ENCODE measurements at regions of chr5 and their contacts with region 1.

Region 1: DNA sequence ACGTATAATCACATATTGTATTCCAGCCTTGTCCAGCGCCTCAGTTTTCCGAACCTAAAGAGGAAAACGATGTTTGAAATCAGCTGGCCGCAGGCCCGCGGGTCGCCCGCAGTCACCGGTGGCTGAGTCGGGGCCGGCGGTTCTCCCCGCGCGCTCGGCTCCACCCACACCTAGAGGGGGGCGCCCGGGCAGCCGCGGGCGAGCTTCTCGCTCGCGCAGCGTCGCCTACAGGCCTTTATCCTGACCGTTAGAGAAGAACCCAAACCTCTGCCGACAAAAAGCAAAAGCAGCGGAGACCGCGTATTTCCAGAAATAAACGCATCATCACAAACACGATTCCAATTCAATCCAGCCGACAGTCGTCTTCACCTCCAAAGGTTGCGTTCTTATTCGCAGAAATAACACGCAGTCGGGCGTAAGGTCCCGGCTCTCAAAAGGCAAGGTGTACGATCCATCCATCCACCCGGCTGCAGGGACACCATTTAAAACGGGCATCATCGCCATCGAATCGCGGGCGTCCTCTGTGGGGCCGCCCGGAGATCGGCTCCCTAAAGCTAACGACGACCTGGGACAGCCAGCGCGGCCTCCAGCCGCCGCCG is 680 bp upstream of the NIPBL start:
- DNase-seq: peak; percentile 85
- ATAC-seq: peak; percentile 54
- H3K4me3 Mint-ChIP-seq: peak overlapping the region; percentile 89
- H3K27ac Mint-ChIP-seq: peak overlapping the region; percentile 100
- H3K4me1 Mint-ChIP-seq: peaks cover 31% of the 10 kb centered on the region
- H3K27me3 Mint-ChIP-seq: no peaks in the 10 kb centered on the region

Region 2: DNA sequence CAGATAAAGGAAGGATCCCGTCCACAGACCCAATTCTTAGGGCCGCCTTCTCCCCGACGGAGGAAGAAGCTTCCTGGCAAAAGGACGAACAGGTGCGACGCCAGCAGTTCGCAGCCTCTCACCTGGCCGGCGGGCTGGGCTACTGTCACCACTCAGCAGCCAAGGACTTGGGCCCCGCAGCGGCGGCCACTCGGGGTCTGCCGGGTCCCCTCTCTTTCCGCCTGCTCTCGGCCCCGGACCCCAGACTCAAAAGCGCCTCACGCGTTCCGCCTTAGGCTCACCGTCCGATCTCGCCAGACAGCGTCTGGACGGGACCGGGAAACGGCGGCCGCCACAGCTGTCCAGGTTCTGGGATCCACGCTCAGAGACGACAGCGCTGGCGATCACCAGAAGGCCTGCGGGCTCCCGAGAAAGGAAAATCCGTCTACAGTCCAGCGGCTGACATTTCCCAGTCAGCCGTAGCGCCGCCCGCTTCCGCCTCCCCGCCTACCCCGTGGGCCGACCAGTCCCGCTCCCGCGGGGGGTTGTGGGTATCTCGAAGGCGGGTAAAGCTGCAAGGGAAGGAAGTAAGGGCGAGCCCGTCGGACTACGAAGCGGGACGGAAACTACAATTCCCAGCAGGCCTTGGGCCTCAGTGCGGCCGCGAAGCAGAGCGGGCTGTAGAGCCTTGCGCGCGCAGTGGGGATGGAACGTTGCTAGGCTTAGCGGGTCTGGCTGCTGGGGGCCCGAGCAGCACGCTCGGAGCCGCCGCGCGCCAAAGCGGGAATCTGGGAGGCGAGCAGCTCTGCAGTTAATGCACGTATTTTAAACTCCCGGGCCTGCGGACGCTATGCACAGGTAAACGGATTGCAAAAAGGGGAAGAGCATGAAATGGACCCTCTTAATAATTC is 724.2 kb before region 1 on chr5 and contains the starts of genes LMBRD2 and SKP2:
- CTCF ChIA-PET with region 1: no interaction called
- POLR2A ChIA-PET with region 1: no interaction called
- intact Hi-C with region 1: loop called (anchors 2 kb)
- DNase-seq: peak; percentile 98
- ATAC-seq: peak; percentile 99
- H3K4me3 Mint-ChIP-seq: peak within 1 kb of the TSS; percentile 97
- H3K27ac Mint-ChIP-seq: peak within 1 kb of the TSS; percentile 91
- H3K4me1 Mint-ChIP-seq: peaks cover 55% of the 10 kb centered on the region
- H3K27me3 Mint-ChIP-seq: no peaks in the 10 kb centered on the region
- total RNA-seq, gene LMBRD2: 9.3 to 10.2 TPM
- total RNA-seq, gene SKP2: 48.0 to 56.8 TPM

Region 3: GRCh38 chr5:36932699-36933098 is 56.8 kb after region 1 on chr5:
- CTCF ChIA-PET with region 1: no interaction called
- POLR2A ChIA-PET with region 1: no interaction called
- intact Hi-C with region 1: no loop called
- DNase-seq: no peak
- ATAC-seq: no peak
- H3K4me3 Mint-ChIP-seq: no peak overlapping the region
- H3K27ac Mint-ChIP-seq: no peak overlapping the region
- H3K4me1 Mint-ChIP-seq: peaks cover 70% of the 10 kb centered on the region
- H3K27me3 Mint-ChIP-seq: no peaks in the 10 kb centered on the region

Region 4: GRCh38 chr5:36944607-36945225 is 68.8 kb after region 1 on chr5:
- CTCF ChIA-PET with region 1: interaction called, 4 read pairs
- POLR2A ChIA-PET with region 1: no interaction called
- intact Hi-C with region 1: loop called (anchors 1 to 2 kb)
- DNase-seq: no peak
- ATAC-seq: no peak
- H3K4me3 Mint-ChIP-seq: no peak overlapping the region
- H3K27ac Mint-ChIP-seq: no peak overlapping the region
- H3K4me1 Mint-ChIP-seq: peaks cover 49% of the 10 kb centered on the region
- H3K27me3 Mint-ChIP-seq: no peaks in the 10 kb centered on the region

Region 5: DNA sequence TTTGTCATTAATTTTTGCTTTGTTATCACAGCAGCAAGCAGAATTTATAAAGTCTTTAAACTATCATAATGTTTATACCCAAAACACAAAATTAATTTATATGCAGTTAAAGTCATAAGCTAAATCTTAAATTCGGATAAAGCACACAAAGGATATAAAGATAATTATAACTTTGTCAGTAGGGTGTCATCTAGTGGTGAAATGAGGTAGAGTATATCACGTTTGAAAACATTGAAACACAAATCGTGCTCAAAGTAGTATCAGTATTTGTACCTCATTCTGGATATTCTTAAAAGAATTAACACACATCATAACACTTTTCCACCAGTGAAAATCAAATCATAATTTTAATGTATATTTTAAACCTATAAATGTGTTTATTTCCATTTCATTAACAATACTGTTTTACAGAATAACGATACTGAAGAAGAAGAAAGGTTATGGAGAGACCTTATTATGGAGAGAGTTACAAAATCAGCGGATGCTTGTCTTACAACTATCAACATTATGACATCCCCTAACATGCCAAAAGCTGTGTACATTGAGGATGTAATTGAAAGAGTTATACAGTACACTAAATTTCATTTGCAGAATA is 130.2 kb after region 1 on chr5:
- CTCF ChIA-PET with region 1: interaction called, 4 read pairs
- POLR2A ChIA-PET with region 1: no interaction called
- intact Hi-C with region 1: loop called (anchors 2 to 5 kb)
- DNase-seq: no peak
- ATAC-seq: no peak
- H3K4me3 Mint-ChIP-seq: no peak overlapping the region
- H3K27ac Mint-ChIP-seq: no peak overlapping the region
- H3K4me1 Mint-ChIP-seq: no peaks in the 10 kb centered on the region
- H3K27me3 Mint-ChIP-seq: no peaks in the 10 kb centered on the region

Region 6: GRCh38 chr5:37075399-37075950 is 199.6 kb after region 1 on chr5:
- CTCF ChIA-PET with region 1: no interaction called
- POLR2A ChIA-PET with region 1: no interaction called
- intact Hi-C with region 1: no loop called
- DNase-seq: no peak
- ATAC-seq: no peak
- H3K4me3 Mint-ChIP-seq: no peak overlapping the region
- H3K27ac Mint-ChIP-seq: no peak overlapping the region
- H3K4me1 Mint-ChIP-seq: no peaks in the 10 kb centered on the region
- H3K27me3 Mint-ChIP-seq: no peaks in the 10 kb centered on the region

Region 7: DNA sequence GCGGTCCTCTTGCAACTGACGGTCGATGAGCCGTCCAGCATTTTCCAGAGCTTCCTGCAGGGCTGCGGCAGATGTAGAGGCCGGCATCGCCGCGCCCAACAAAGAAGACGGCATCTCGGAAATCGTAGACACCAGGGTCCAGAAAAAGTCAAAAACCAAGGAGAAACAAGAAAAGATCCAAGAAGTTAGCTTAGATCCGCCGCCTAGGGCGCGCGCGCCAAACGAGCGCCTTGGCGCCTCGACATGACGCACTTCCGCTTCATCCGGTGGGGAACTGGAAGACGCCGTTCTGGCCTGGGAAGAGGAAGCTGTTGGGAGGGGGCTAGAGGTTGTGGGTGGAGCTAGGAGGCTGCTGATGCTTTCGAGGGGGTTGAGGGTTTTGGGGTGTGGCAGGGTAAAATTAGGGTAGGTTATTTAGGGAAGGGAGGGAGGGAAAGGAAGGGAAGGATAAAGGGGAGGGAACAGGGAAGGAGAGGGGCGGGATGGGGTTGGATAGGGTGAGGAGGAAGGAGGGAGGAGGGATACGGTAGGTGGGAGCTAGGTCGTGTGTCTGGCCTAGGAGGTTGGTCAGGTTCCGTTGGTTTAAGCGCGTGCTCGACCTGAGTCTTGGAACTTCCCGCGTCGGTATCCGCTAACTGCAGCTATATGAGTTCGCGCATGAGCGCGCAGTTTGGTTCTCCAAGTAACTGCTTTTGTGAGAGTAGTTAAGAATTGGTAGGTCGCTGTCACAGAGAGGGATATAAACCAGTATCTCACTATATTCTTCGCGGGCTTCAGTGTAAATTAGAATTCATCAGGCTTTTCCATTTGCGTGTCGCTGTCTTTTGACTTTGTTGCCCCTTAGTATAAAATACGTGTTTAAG is 495.2 kb after region 1 on chr5 and contains the start of gene NUP155:
- CTCF ChIA-PET with region 1: no interaction called
- POLR2A ChIA-PET with region 1: no interaction called
- intact Hi-C with region 1: loop called (anchors 1 to 2 kb)
- DNase-seq: peak; percentile 95
- ATAC-seq: peak; percentile 95
- H3K4me3 Mint-ChIP-seq: peak within 1 kb of the TSS; percentile 98
- H3K27ac Mint-ChIP-seq: peak within 1 kb of the TSS; percentile 99
- H3K4me1 Mint-ChIP-seq: peaks cover 35% of the 10 kb centered on the region
- H3K27me3 Mint-ChIP-seq: no peaks in the 10 kb centered on the region
- total RNA-seq, gene NUP155: 94.9 to 113 TPM

Region 8: GRCh38 chr5:37448941-37449340 is 573.1 kb after region 1 on chr5:
- CTCF ChIA-PET with region 1: no interaction called
- POLR2A ChIA-PET with region 1: no interaction called
- intact Hi-C with region 1: no loop called
- DNase-seq: no peak
- ATAC-seq: no peak
- H3K4me3 Mint-ChIP-seq: no peak overlapping the region
- H3K27ac Mint-ChIP-seq: no peak overlapping the region
- H3K4me1 Mint-ChIP-seq: peaks cover 5% of the 10 kb centered on the region
- H3K27me3 Mint-ChIP-seq: no peaks in the 10 kb centered on the region

Measured in activated CD4-positive, alpha-beta T cell treated with anti-CD3 and anti-CD28 coated beads for 36 hours (primary cell).